Naive thymus-derived CD4-positive, alpha-beta T cell (primary cell): ENCODE measurements at regions of chr1 and their contacts with region 1.

Region 1: DNA sequence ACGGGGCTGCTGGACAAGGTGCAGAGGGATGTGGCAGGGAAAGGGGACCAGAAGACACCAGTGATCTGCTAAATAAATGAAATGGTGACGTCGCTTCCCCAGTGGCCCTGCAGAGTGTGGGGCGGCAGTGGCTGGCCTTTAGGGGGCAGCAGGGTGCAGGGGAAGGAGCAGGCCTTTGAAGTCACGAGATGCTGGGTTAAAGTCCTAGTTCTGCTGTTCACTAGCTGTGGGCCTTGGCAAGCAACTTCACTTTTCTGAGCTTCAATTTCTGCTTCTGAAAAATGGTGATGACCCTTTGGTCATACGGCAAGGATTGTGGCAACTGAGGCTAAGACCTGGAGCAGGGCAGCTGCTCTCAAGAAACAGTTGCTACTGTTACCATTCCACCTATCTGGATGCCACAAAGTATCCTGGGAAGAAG is 9.2 kb upstream of the GALE start:
- DNase-seq: peak; percentile 71 to 84 (median 80)
- ATAC-seq: peak; percentile 94
- H3K4me3 ChIP-seq: no peak overlapping the region
- H3K4me3 Mint-ChIP-seq: no peak overlapping the region
- H3K27ac ChIP-seq: no peak overlapping the region
- H3K27ac Mint-ChIP-seq: peak overlapping the region in 4 of 9 donors; percentile 46 to 79 (median 64)
- H3K4me1 ChIP-seq: peaks cover 0 to 10% of the 10 kb centered on the region in 2 donors
- H3K4me1 Mint-ChIP-seq: peaks cover 15 to 30% (median 17%) of the 10 kb centered on the region in 7 donors
- H3K27me3 ChIP-seq: no peaks in the 10 kb centered on the region
- H3K27me3 Mint-ChIP-seq: no peaks in the 10 kb centered on the region

Region 2: DNA sequence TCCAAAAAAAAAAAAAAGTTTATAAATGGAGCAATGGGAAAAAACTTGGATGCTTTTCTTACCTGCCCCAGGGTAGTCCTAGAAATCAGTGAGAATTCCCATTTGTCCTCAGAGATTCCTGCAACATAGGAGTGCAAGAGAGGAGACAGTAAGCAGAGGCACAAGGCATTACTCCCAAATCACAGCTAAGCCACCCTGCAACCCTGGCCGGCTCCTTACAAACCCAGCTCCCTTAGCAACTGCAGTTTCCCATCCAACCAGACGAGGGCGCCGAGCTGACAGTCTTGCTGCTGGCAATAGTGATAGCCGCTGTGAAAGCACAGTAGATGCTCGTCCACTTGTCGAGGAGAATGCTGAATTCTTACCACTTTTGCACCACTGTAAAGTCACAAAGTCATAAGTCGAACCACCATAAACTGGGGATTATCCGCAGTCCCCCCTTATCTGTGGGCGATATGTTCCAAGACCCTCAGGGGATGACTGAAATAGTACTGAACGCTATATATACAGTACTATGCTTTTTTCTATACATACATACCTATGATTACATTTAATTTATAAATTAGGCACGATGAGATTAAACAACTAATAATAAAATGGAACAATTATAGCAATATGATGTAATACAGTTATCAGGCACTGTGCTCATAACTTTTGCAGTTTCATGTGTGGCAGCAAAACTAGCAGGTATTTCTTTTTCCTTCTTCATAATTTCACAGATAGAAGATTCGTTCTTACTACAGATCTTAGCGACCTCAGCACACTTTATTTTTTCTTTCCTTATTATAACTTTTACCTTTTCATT is 37.5 kb before region 1 on chr1:
- CTCF ChIA-PET with region 1: interaction called, 7 read pairs
- POLR2A ChIA-PET with region 1: no interaction called
- intact Hi-C with region 1: loop called in 1 of 2 experiments (anchors 1 kb)
- DNase-seq: peak; percentile 52 to 84 (median 78)
- ATAC-seq: peak; percentile 85
- H3K4me3 ChIP-seq: no peak overlapping the region
- H3K4me3 Mint-ChIP-seq: peak overlapping the region in 1 of 10 donors; percentile 17
- H3K27ac ChIP-seq: no peak overlapping the region
- H3K27ac Mint-ChIP-seq: peak overlapping the region in 4 of 9 donors; percentile 4 to 53 (median 23)
- H3K4me1 ChIP-seq: peaks cover 5 to 7% of the 10 kb centered on the region in 2 donors
- H3K4me1 Mint-ChIP-seq: peaks cover 2 to 38% (median 29%) of the 10 kb centered on the region in 7 donors
- H3K27me3 ChIP-seq: no peaks in the 10 kb centered on the region
- H3K27me3 Mint-ChIP-seq: no peaks in the 10 kb centered on the region

Region 3: DNA sequence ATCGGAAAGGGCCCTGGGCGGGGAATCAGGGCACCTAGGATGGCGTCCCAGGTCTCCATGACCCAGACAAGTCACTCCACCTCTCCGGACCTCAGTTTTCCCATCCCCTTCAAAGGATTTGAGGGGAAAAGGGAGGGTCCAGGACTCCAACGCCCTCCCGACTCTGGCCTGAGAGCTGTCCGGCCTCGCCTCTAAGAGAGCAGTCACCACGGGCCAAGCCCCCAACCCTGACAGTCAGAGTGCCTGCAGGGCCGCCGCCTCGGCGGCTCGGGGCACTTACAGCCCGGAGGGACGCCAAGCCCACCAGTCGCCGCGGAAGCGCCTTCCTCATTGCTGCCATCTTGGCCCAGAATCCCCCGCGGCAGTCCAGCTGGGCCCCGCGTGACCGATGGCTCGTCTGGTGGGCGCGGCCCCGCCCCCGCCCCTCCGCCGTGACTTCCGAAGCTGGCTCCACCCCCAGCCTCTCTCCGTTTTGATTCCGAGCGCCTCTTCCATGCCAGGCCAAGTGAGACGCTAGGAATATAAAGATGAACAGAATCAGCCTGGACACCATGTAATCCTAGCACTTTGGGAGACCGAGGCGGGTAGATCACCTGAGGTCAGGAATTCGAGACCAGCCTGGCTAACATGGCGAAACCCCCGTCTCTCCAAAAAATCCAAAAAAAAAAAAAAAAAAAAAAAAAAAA is 15.5 kb after region 1 on chr1 and contains the start of gene HMGCL:
- CTCF ChIA-PET with region 1: interaction called, 10 read pairs
- POLR2A ChIA-PET with region 1: interaction called, 22 read pairs
- intact Hi-C with region 1: loop called (anchors 1 to 2 kb)
- DNase-seq: peak; percentile 64 to 89 (median 81)
- ATAC-seq: peak; percentile 99
- H3K4me3 ChIP-seq: peak within 1 kb of the TSS; percentile 95
- H3K4me3 Mint-ChIP-seq: peak within 1 kb of the TSS; percentile 86 to 96 (median 94)
- H3K27ac ChIP-seq: peak within 1 kb of the TSS; percentile 95
- H3K27ac Mint-ChIP-seq: peak within 1 kb of the TSS; percentile 76 to 98 (median 96)
- H3K4me1 ChIP-seq: peaks cover 6% of the 10 kb centered on the region in 2 donors
- H3K4me1 Mint-ChIP-seq: peaks cover 11 to 33% (median 20%) of the 10 kb centered on the region in 7 donors
- H3K27me3 ChIP-seq: no peaks in the 10 kb centered on the region
- H3K27me3 Mint-ChIP-seq: peaks cover 0 to 5% (median 0%) of the 10 kb centered on the region in 5 donors
- total RNA-seq, gene HMGCL: 16.2 to 38.9 (median 27.3) TPM

Region 4: DNA sequence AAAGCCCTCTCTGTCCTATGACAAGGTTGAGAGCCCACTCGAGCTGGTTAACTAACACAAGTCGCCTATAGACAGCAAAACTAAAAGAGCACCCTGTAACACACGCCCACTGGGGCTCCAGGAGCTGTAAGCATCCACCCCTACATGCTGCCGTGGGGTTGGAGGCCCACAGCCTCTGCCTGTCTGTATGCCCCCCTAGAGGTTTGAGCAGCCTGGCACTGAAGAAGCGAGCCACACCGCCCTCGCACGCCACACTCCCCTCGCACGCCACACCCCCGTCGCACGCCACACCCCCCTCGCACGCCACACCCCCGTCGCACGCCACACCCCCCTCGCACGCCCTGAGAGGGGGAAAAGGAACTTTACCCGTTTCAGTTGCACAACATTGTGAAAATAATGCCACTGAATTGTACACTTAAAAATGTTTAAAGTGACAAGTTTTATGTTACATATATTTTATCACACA is 28.7 kb after region 1 on chr1:
- CTCF ChIA-PET with region 1: interaction called, 6 read pairs
- POLR2A ChIA-PET with region 1: no interaction called
- intact Hi-C with region 1: loop called (anchors 1 to 2 kb)
- DNase-seq: peak; percentile 61 to 81 (median 72)
- ATAC-seq: peak; percentile 100
- H3K4me3 ChIP-seq: peak overlapping the region; percentile 42
- H3K4me3 Mint-ChIP-seq: peak overlapping the region; percentile 73 to 90 (median 84)
- H3K27ac ChIP-seq: no peak overlapping the region
- H3K27ac Mint-ChIP-seq: peak overlapping the region in 4 of 9 donors; percentile 34 to 90 (median 53)
- H3K4me1 ChIP-seq: peaks cover 6% of the 10 kb centered on the region in 2 donors
- H3K4me1 Mint-ChIP-seq: peaks cover 0 to 14% (median 12%) of the 10 kb centered on the region in 7 donors
- H3K27me3 ChIP-seq: no peaks in the 10 kb centered on the region
- H3K27me3 Mint-ChIP-seq: peaks cover 0 to 32% (median 0%) of the 10 kb centered on the region in 5 donors

Region 5: DNA sequence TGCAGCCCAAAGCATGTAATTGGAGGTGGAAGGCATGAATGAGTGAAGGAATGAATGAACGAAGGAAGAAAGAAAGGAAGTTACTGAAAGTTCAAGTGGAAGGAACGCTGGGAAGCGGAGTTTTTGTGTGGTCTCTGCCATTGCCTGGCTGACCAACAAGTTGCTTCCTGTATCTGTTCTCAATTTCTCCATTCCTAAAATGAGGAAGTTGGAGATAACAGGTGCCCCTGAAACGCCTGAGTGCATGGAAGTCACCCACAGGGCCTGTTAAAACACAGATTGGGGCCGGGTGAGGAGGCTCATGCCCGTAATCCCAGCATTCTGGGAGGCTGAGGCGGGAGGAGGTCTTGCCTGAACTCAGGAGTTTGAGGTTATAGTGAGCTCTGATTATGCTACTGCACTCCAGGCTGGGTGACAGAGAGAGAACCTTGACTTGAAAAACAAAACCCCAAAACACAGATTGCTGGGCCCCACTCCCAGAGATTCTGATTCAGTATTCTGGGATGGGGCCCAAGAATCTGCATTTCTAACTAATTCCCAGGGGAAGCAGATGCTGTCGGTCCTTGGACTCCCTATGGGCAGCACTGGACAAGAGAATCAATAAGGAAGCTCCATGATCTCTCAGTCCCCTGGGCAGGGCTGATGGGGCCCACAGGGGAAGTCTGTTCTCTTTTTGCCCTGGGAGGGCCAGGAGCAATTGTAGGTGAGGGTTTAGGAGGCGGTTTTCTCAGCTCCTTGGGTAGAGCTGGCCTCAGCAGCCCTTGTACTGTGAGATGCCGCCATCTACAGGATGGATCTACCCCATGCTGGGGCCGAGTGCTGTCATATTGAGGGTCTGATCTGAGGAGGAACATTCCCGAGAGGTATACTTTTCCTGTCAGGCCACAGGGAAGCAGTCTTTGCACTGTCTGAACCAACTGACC is 106.7 kb after region 1 on chr1:
- CTCF ChIA-PET with region 1: interaction called, 32 read pairs
- POLR2A ChIA-PET with region 1: interaction called, 5 read pairs
- intact Hi-C with region 1: loop called (anchors 1 kb)
- DNase-seq: peak; percentile 24 to 66 (median 55)
- ATAC-seq: peak; percentile 95
- H3K4me3 ChIP-seq: no peak overlapping the region
- H3K4me3 Mint-ChIP-seq: no peak overlapping the region
- H3K27ac ChIP-seq: no peak overlapping the region
- H3K27ac Mint-ChIP-seq: peak overlapping the region in 2 of 9 donors; percentile 64 to 72
- H3K4me1 ChIP-seq: peaks cover 7 to 8% of the 10 kb centered on the region in 2 donors
- H3K4me1 Mint-ChIP-seq: peaks cover 10 to 41% (median 30%) of the 10 kb centered on the region in 7 donors
- H3K27me3 ChIP-seq: no peaks in the 10 kb centered on the region
- H3K27me3 Mint-ChIP-seq: peaks cover 0 to 2% (median 0%) of the 10 kb centered on the region in 5 donors